Heart right ventricle (tissue), 16 donors: ENCODE measurements at regions of chr5 and their contacts with region 1.

Region 1: DNA sequence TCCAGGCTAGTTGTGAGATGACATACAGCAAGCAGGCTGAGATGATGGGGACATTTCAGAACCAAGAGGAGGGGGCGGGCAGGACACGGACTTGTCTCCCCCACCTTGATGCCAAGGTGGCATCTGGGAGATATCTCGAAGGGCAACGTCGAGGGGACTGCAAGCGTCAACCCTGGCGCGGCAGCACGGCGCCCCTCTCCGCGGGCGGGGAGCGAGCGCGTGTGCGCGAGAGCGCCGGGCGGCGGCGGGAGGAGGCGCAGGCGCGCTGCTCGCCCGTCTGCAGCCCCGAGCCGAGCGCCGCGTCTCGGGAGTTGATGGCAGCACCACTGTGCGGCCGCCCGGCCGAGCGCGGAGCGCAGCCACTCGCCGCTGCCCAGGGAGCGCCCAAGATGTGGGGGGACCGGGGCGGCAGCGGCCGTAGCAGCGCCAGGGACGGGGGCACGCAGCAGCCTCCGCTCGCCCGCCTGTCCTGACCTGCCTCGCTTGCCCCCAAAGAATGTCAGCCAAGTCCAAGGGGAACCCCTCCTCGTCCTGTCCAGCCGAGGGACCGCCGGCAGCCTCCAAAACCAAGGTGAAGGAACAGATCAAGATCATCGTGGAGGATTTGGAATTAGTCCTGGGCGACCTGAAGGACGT is at the start of gene PRR16:
- DNase-seq: peak; percentile 35 to 69
- ATAC-seq: peak; percentile 81 to 96 (median 88)
- H3K4me3 ChIP-seq: peak within 1 kb of the TSS; percentile 50 to 85 (median 72)
- H3K27ac ChIP-seq: peak within 1 kb of the TSS; percentile 56 to 89 (median 81)
- H3K4me1 ChIP-seq: peaks cover 0 to 27% (median 20%) of the 10 kb centered on the region in 9 donors
- H3K27me3 ChIP-seq: peaks cover 0 to 41% (median 0%) of the 10 kb centered on the region in 7 donors
- CTCF ChIP-seq: peak in 5 of 9 donors; percentile 36 to 53 (median 49)
- total RNA-seq, gene PRR16: 5.6 to 22.9 (median 11.7) TPM

Region 2: DNA sequence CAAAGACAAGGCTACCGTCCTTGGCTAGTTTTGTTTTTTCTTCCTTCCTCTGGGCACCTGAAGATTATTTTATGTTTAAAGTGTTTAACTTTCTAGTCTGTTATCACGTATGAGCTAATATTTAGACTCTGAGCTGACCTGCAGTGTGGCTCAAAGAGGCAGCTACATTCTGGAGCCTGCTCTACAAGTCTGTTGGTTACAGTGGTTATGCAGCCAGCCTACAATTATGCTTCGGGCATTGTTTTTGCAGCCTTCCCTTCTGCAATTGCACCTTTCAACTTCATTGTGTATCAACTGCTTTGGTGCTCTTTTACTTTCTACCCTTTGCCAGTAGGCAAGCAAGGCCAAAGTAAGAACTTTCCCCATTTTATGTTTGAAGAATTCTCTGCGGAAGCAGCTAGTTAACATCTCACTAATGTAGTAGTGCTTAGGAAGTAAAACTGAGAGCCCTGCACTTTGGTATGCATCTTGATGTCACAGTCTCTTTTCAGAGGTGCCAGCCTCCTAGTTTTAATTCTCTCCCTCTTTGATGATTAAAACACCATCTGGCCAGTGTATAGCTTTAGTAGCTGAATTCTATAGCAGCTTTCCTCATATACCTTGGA is 512.7 kb before region 1 on chr5:
- intact Hi-C with region 1: loop called in 3 of 10 experiments (anchors 5 to 10 kb)
- DNase-seq: no peak
- ATAC-seq: no peak
- H3K4me3 ChIP-seq: no peak overlapping the region
- H3K27ac ChIP-seq: no peak overlapping the region
- H3K4me1 ChIP-seq: peaks cover 0 to 8% (median 0%) of the 10 kb centered on the region in 9 donors
- H3K27me3 ChIP-seq: no peaks in the 10 kb centered on the region
- CTCF ChIP-seq: no peak

Region 3: GRCh38 chr5:120055858-120056257 is 408.3 kb before region 1 on chr5:
- intact Hi-C with region 1: loop called in 5 of 10 experiments (anchors 5 to 10 kb)
- DNase-seq: no peak
- ATAC-seq: peak; percentile 52 to 81 (median 74)
- H3K4me3 ChIP-seq: no peak overlapping the region
- H3K27ac ChIP-seq: peak overlapping the region in 7 of 10 donors; percentile 6 to 76 (median 28)
- H3K4me1 ChIP-seq: peaks cover 0 to 43% (median 7%) of the 10 kb centered on the region in 9 donors
- H3K27me3 ChIP-seq: no peaks in the 10 kb centered on the region
- CTCF ChIP-seq: peak in 7 of 9 donors; percentile 3 to 53 (median 38)

Region 4: GRCh38 chr5:120258123-120258522 is 206.0 kb before region 1 on chr5:
- intact Hi-C with region 1: loop called in 1 of 10 experiments (anchors 10 kb)
- DNase-seq: peak in 1 of 2 donors; percentile 8
- ATAC-seq: peak in 7 of 8 donors; percentile 17 to 86 (median 67)
- H3K4me3 ChIP-seq: peak overlapping the region in 1 of 10 donors; percentile 1
- H3K27ac ChIP-seq: peak overlapping the region in 2 of 10 donors; percentile 51 to 58
- H3K4me1 ChIP-seq: peaks cover 0 to 4% (median 0%) of the 10 kb centered on the region in 9 donors
- H3K27me3 ChIP-seq: no peaks in the 10 kb centered on the region
- CTCF ChIP-seq: no peak

Region 5: DNA sequence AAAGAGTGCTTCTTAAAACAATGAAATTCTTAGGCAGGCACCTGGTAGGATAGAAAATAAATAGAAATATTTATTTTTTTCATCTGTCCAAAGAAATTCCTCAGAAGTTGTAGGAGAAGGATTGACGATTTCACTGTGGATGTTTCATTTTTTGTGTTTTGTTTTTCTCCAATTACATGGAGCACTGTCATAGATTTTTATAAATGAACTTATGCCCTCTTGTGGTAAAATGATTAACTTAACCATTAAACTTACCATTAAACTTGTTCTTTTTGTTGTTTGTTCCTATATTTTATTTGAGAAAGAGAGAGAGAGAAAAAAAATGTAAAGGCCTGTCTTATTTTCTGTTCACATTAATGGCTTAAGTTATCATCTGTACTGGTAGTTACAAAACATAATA is 339.2 kb after region 1 on chr5:
- intact Hi-C with region 1: loop called in 2 of 10 experiments (anchors 10 kb)
- DNase-seq: no peak
- ATAC-seq: no peak
- H3K4me3 ChIP-seq: no peak overlapping the region
- H3K27ac ChIP-seq: no peak overlapping the region
- H3K4me1 ChIP-seq: peaks cover 0 to 6% (median 0%) of the 10 kb centered on the region in 9 donors
- H3K27me3 ChIP-seq: no peaks in the 10 kb centered on the region
- CTCF ChIP-seq: peak in 6 of 9 donors; percentile 22 to 54 (median 41)